A549 (cell line): ENCODE measurements at regions of chr22 and their contacts with region 1.

Region 1: DNA sequence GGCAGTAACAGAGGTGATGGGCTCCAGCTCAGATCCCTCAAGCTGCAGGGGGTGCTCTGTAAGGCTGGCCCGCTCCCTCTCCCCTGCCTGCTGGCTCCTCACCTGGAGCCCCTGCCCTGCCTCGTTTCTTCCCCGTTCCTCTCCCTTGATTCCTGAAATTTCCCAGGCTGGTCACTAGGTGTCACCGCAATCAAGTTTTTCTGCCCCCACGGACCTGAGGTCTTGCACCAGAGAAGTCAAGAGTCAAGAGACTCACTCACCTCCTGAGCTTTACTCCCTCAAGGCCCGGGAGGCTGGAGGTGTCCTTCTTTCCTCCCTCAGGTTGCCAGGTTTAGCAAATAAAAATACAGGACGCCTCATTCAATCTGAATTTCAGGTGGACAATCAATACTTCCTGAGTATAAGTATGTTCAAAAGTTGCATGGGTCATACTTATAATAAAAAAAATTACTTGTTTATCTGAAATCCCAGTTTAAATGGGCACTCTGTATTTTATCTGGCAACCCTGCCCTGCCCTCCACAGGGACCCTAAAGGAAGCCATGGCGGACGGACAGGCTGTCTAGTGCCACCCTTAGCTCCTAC is 69.2 kb downstream of the SCUBE1 start:
- DNase-seq: peak; percentile 61 to 69
- ATAC-seq: peak; percentile 65 to 87; a peak in 5 of 6 replicates
- H3K4me3 ChIP-seq: no peak overlapping the region
- H3K27ac ChIP-seq: no peak overlapping the region
- H3K4me1 ChIP-seq: no peaks in the 10 kb centered on the region
- CTCF ChIP-seq: peak; percentile 60
- EP300 ChIP-seq: no peak
- POLR2A ChIP-seq: no peak
- RAD21 ChIP-seq: peak; percentile 80 to 89

Region 2: GRCh38 chr22:43230971-43231723 is 42.8 kb before region 1 on chr22:
- CTCF ChIA-PET with region 1: interaction called, 19 read pairs
- POLR2A ChIA-PET with region 1: no interaction called
- DNase-seq: peak; percentile 45 to 60
- ATAC-seq: peak; percentile 52 to 77; a peak in 3 of 6 replicates
- H3K4me3 ChIP-seq: no peak overlapping the region
- H3K27ac ChIP-seq: no peak overlapping the region
- H3K4me1 ChIP-seq: no peaks in the 10 kb centered on the region
- CTCF ChIP-seq: peak; percentile 69
- EP300 ChIP-seq: no peak
- POLR2A ChIP-seq: no peak
- RAD21 ChIP-seq: peak; percentile 72 to 87

Region 3: GRCh38 chr22:43263645-43264514 is 10.1 kb before region 1 on chr22:
- CTCF ChIA-PET with region 1: interaction called, 32 read pairs
- POLR2A ChIA-PET with region 1: no interaction called
- DNase-seq: no peak
- ATAC-seq: no peak
- H3K4me3 ChIP-seq: no peak overlapping the region
- H3K27ac ChIP-seq: no peak overlapping the region
- H3K4me1 ChIP-seq: no peaks in the 10 kb centered on the region
- CTCF ChIP-seq: no peak
- EP300 ChIP-seq: no peak
- POLR2A ChIP-seq: no peak
- RAD21 ChIP-seq: no peak

Region 4: GRCh38 chr22:43337385-43337784 is 63.4 kb after region 1 on chr22:
- CTCF ChIA-PET with region 1: interaction called, 15 read pairs
- POLR2A ChIA-PET with region 1: no interaction called
- DNase-seq: no peak
- ATAC-seq: no peak
- H3K4me3 ChIP-seq: no peak overlapping the region
- H3K27ac ChIP-seq: no peak overlapping the region
- H3K4me1 ChIP-seq: no peaks in the 10 kb centered on the region
- CTCF ChIP-seq: no peak
- EP300 ChIP-seq: no peak
- POLR2A ChIP-seq: no peak
- RAD21 ChIP-seq: no peak

Region 5: GRCh38 chr22:43356881-43357280 is 82.9 kb after region 1 on chr22:
- CTCF ChIA-PET with region 1: interaction called, 10 read pairs
- POLR2A ChIA-PET with region 1: no interaction called
- DNase-seq: no peak
- ATAC-seq: no peak
- H3K4me3 ChIP-seq: no peak overlapping the region
- H3K27ac ChIP-seq: no peak overlapping the region
- H3K4me1 ChIP-seq: no peaks in the 10 kb centered on the region
- CTCF ChIP-seq: no peak
- EP300 ChIP-seq: no peak
- POLR2A ChIP-seq: no peak
- RAD21 ChIP-seq: no peak

Region 6: DNA sequence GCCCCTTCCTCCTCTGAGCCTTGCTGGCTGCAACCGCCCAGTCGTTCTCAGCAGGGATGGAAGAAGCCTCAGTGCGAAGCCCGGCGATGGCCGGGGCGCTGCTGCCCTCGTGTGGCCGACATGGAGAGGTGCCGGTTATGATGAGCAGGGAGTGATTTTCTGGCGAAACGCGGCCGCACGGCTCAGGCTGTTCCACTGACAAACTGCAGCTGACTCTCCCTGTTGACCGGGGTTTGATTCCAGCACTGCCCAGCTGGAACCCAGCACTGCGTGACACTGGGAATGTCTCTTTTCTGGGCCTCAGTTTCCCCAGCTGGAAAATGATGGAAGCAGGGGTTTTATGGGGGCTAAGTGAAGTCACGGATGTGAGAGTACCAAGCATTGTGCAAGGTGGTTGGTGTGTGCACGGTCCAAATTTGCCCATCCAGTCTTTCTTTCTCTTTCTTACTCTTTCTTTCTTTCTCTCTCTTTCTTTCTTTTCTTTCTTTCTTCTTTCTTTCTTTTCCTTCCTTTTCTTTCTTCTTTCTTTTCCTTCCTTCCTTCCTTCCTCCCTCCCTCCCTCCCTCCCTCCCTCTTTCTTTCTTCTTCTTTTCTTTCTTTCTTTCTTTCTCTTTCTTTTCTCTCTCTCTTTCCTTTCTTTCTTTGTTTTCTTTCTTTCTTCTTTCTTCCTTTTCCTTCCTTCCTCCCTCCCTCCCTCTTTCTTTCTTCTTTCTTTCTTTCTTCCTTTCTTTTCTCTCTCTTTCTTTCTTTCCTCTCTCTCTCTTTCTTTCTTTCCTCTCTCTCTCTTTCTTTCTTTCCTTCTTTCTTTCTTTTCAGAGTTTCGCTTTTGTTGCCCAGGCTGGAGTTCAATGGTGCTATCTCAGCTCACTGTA is 112.0 kb after region 1 on chr22:
- CTCF ChIA-PET with region 1: interaction called, 134 read pairs
- POLR2A ChIA-PET with region 1: no interaction called
- DNase-seq: peak; percentile 69 to 72
- ATAC-seq: peak; percentile 91 to 95
- H3K4me3 ChIP-seq: no peak overlapping the region
- H3K27ac ChIP-seq: no peak overlapping the region
- H3K4me1 ChIP-seq: no peaks in the 10 kb centered on the region
- CTCF ChIP-seq: peak; percentile 75
- EP300 ChIP-seq: no peak
- POLR2A ChIP-seq: no peak
- RAD21 ChIP-seq: peak; percentile 88 to 89

Region 7: DNA sequence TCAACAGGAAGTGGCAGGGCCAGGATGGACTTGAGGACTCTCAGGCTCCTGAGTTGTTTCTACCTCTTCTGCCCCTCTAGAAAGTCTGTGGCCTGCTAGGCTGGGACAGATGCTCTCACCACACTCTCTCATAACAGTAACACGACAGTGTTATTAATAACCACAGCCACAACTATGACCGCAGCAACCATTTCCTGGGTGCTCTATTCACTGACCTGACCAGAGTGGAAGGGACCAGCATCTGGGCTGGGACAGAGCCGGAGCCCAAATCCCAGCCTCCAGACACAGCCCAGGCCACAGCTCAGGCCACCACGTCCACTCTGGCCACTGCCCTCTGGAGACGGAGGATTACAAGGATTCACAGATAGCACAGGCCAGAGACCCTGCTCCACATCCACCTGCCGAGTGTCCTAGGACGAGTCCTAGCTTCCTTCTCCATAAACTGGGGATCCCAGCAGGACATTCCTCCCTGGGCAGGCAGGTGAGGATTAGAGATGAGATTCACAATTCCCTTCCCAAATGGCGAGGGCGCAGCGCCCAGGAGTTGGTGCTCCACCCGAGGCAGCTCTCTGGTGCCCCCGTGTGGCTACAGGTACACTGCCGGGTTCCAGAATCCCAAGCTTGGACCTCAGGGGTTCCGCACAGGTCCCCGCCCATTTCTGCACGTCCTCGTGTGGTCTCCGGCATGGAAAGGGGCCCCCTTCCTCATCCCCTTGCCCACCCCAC is 610.8 kb after region 1 on chr22:
- CTCF ChIA-PET with region 1: interaction called, 10 read pairs
- POLR2A ChIA-PET with region 1: no interaction called
- DNase-seq: peak; percentile 48 to 57
- ATAC-seq: peak; percentile 63 to 80; a peak in 5 of 6 replicates
- H3K4me3 ChIP-seq: no peak overlapping the region
- H3K27ac ChIP-seq: no peak overlapping the region
- H3K4me1 ChIP-seq: no peaks in the 10 kb centered on the region
- CTCF ChIP-seq: peak; percentile 58
- EP300 ChIP-seq: no peak
- POLR2A ChIP-seq: no peak
- RAD21 ChIP-seq: peak; percentile 54 to 58